ENCODE measurements at regions of chr1 and their contacts with region 1.

Region 1: DNA sequence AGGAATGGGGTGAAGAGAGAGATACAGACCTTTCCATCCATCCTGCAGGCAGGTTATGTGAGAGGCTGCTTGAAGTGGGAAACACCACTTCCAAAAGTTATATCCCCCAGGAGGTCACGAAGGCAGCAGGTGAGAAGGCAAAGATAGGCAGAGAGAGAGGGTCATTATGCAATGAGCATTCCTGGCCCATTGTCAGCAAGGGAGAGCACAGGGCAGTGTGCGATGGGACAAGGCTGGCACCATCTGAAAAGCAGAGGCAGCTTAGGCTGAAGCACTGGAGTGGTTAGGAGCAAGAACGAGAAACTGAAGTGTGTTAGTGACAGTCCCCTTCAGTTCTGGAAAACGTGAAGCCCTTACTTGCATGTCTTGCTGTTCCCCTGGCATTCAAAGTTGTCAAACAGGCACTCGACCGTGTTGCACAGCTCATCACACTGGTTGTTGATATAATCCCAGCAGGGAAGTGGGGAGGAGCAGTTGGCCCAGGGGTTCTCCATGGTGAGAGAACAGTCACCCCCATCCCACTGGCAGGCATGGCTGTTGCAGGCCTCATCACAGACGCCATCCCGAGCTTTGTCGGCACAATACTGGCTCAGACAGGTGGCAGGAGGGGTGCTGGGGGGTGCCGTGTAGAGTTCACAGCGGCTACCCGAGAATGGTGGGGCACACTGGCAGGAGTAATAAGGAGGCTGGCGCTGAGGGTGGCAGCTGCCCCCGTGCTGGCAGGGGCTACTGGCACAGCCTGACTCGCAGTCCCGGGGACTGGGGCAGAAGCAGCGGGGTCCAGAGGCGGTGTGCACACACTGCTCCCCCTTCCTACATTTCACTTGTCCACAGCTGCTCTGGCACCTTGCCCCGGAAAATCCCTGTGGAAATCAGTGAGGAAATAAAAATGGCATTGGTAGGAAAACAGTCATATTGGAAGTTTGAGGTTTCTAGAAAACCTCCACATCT is 28.9 kb upstream of the ADAM30 start:
- DNase-seq: no peak
- ATAC-seq: no peak
- H3K4me3 Mint-ChIP-seq: no peak overlapping the region
- H3K27ac Mint-ChIP-seq: no peak overlapping the region
- H3K4me1 Mint-ChIP-seq: no peaks in the 10 kb centered on the region
- H3K27me3 Mint-ChIP-seq: no peaks in the 10 kb centered on the region

Region 2: DNA sequence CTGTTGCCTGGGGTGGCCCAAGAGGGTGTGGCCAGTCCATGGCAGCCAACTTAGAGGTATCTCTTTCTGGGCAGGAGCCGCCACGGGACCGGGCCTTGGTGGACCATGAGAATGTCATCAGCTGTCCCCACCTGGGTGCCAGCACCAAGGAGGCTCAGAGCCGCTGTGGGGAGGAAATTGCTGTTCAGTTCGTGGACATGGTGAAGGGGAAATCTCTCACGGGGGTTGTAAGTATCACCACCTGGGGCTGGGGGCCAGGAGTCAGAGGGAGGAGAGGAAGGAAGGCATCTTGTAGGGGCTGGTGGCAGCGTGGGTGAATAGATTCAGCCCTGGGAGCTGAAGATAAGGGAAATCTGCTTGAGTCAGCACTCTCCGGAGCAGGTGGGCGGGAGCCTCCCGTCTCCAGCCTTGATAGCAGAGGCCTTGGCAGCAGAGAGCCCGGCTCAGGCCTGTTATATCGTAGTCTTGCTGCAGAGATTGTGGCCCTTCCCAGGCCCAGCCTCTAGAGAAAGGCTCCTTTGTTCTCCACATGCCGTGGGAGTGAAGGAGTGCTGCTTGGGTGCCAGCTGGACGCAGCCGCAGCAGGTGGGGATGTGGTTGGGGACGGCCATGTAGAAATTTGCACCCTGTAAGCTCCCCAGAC is 188.1 kb before region 1 on chr1:
- CTCF ChIA-PET with region 1: no interaction called
- POLR2A ChIA-PET with region 1: no interaction called
- intact Hi-C with region 1: loop called in 1 of 2 experiments (anchors 5 kb)
- DNase-seq: no peak
- ATAC-seq: no peak
- H3K4me3 Mint-ChIP-seq: no peak overlapping the region
- H3K27ac Mint-ChIP-seq: no peak overlapping the region
- H3K4me1 Mint-ChIP-seq: peaks cover 3% of the 10 kb centered on the region
- H3K27me3 Mint-ChIP-seq: no peaks in the 10 kb centered on the region